Naive thymus-derived CD4-positive, alpha-beta T cell (primary cell): ENCODE measurements at regions of chr15 and their contacts with region 1.

Region 1: GRCh38 chr15:98647774-98648653 is at the start of gene IGF1R:
- DNase-seq: peak; percentile 87 to 98 (median 94)
- ATAC-seq: peak; percentile 86
- H3K4me3 ChIP-seq: peak within 1 kb of the TSS; percentile 74
- H3K4me3 Mint-ChIP-seq: peak within 1 kb of the TSS; percentile 83 to 98 (median 92)
- H3K27ac ChIP-seq: peak within 1 kb of the TSS; percentile 82
- H3K27ac Mint-ChIP-seq: peak within 1 kb of the TSS; percentile 89 to 97 (median 93)
- H3K4me1 ChIP-seq: peaks cover 0 to 11% of the 10 kb centered on the region in 2 donors
- H3K4me1 Mint-ChIP-seq: peaks cover 14 to 41% (median 29%) of the 10 kb centered on the region in 7 donors
- H3K27me3 ChIP-seq: peaks cover 0 to 16% of the 10 kb centered on the region in 2 donors
- H3K27me3 Mint-ChIP-seq: peaks cover 0 to 58% (median 0%) of the 10 kb centered on the region in 5 donors
- total RNA-seq, gene IGF1R: 37.4 to 167 (median 124) TPM

Region 2: GRCh38 chr15:98581715-98582114 is 66.3 kb before region 1 on chr15:
- CTCF ChIA-PET with region 1: interaction called, 29 read pairs
- POLR2A ChIA-PET with region 1: interaction called, 12 read pairs
- intact Hi-C with region 1: loop called (anchors 1 to 2 kb)
- DNase-seq: peak in 6 of 9 donors; percentile 18 to 54 (median 40)
- ATAC-seq: peak; percentile 60
- H3K4me3 ChIP-seq: no peak overlapping the region
- H3K4me3 Mint-ChIP-seq: no peak overlapping the region
- H3K27ac ChIP-seq: no peak overlapping the region
- H3K27ac Mint-ChIP-seq: no peak overlapping the region
- H3K4me1 ChIP-seq: peaks cover 0 to 11% of the 10 kb centered on the region in 2 donors
- H3K4me1 Mint-ChIP-seq: peaks cover 4 to 18% (median 13%) of the 10 kb centered on the region in 7 donors
- H3K27me3 ChIP-seq: peaks cover 0 to 3% of the 10 kb centered on the region in 2 donors
- H3K27me3 Mint-ChIP-seq: peaks cover 22 to 58% (median 34%) of the 10 kb centered on the region in 5 donors

Region 3: DNA sequence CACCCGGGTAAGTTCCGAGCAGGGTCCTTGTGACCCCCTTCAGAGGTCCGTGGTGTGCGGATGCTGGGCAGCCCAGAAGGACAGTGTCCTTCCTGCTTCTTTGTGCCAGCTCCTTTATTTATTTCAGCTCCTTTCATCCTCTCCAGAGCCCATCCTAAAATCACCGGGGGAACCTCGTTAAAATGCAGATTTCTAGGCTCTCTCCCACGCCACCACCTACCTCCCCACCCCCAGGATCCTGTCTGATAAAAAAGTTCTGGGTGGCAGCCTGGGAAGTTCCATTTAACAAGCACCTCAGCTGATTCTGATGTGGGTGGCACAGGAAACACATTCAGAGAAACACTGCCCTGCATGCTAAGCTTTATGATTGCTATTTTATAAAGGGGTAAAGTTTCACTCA is 12.2 kb before region 1 on chr15:
- CTCF ChIA-PET with region 1: interaction called, 4 read pairs
- POLR2A ChIA-PET with region 1: interaction called, 46 read pairs
- intact Hi-C with region 1: loop called in 1 of 2 experiments (anchors 1 kb)
- DNase-seq: peak in 5 of 9 donors; percentile 17 to 42 (median 29)
- ATAC-seq: peak; percentile 51
- H3K4me3 ChIP-seq: no peak overlapping the region
- H3K4me3 Mint-ChIP-seq: peak overlapping the region in 9 of 10 donors; percentile 59 to 83 (median 77)
- H3K27ac ChIP-seq: no peak overlapping the region
- H3K27ac Mint-ChIP-seq: peak overlapping the region in 7 of 9 donors; percentile 34 to 79 (median 62)
- H3K4me1 ChIP-seq: peaks cover 0 to 12% of the 10 kb centered on the region in 2 donors
- H3K4me1 Mint-ChIP-seq: peaks cover 5 to 23% (median 18%) of the 10 kb centered on the region in 7 donors
- H3K27me3 ChIP-seq: no peaks in the 10 kb centered on the region
- H3K27me3 Mint-ChIP-seq: peaks cover 0 to 13% (median 0%) of the 10 kb centered on the region in 5 donors

Region 4: DNA sequence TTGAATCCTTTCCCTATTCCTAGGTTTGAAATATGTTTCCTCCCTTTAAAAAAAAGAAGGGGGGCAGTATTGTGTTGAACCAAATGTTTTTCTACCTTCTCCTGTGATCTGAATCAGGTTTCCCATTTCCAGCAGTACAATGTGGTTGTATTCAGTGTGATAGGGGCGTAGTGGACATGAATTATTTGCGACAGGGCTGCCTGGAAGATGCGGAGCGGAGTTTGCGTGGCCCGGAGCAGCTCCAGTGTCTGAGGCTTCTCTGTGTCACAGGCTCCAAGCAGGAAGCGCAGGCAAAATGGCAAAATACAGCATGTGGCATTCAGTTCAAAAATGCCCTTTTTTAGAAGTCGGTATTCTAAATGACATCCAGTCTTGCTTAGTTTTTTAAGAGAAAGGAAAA is 205.1 kb after region 1 on chr15:
- CTCF ChIA-PET with region 1: interaction called, 4 read pairs
- POLR2A ChIA-PET with region 1: interaction called, 4 read pairs
- intact Hi-C with region 1: loop called (anchors 1 kb)
- DNase-seq: peak; percentile 36 to 74 (median 65)
- ATAC-seq: peak; percentile 68
- H3K4me3 ChIP-seq: peak overlapping the region; percentile 81
- H3K4me3 Mint-ChIP-seq: peak overlapping the region; percentile 87 to 98 (median 93)
- H3K27ac ChIP-seq: peak overlapping the region; percentile 61
- H3K27ac Mint-ChIP-seq: peak overlapping the region; percentile 85 to 97 (median 91)
- H3K4me1 ChIP-seq: peaks cover 19 to 20% of the 10 kb centered on the region in 2 donors
- H3K4me1 Mint-ChIP-seq: peaks cover 39 to 90% (median 85%) of the 10 kb centered on the region in 7 donors
- H3K27me3 ChIP-seq: no peaks in the 10 kb centered on the region
- H3K27me3 Mint-ChIP-seq: no peaks in the 10 kb centered on the region

Region 5: DNA sequence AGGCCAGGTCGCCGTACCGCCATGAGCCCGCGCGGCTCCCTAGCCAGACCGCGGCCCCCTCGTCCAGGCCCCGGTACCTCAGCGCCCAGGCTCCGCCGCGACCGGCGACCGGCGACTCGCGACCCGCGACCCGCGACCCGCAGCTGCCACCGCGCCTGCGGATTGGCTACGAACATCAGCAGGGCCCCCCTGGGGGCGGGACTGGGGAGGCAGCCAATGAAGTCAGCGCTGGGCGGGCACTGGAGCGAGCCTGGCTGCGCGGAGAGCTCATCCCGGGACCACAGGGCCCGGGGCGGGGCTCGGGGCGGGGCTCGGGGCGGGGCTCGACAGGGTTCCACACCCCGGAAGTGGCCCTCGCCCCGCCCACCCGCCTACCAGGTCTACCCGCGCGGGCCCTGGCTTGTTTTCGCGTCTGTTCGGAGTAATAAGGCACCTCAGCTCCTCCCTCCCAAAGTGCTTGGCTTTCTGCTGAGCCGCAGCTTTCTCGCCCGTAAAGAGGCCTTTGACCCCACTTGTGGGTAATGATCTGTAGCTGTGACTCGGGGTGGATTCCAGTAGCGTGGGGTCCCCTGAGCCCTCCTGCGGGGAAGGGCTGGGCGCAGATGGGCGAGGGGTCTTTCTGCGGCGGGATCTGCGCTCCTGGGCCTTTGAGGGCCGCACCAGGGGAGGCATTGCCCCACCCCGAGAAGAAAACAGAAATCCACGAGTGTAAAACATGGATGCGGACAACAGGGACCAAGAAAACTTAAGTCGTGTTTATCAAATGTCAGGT is 1085.4 kb after region 1 on chr15 and contains the start of gene LYSMD4:
- CTCF ChIA-PET with region 1: no interaction called
- POLR2A ChIA-PET with region 1: interaction called, 3 read pairs
- intact Hi-C with region 1: loop called in 1 of 2 experiments (anchors 1 kb)
- DNase-seq: peak; percentile 93 to 98 (median 96)
- ATAC-seq: peak; percentile 100
- H3K4me3 ChIP-seq: peak within 1 kb of the TSS; percentile 70
- H3K4me3 Mint-ChIP-seq: peak within 1 kb of the TSS; percentile 81 to 92 (median 88)
- H3K27ac ChIP-seq: peak within 1 kb of the TSS; percentile 84
- H3K27ac Mint-ChIP-seq: peak within 1 kb of the TSS; percentile 82 to 97 (median 95)
- H3K4me1 ChIP-seq: peaks cover 10 to 13% of the 10 kb centered on the region in 2 donors
- H3K4me1 Mint-ChIP-seq: peaks cover 5 to 36% (median 27%) of the 10 kb centered on the region in 7 donors
- H3K27me3 ChIP-seq: no peaks in the 10 kb centered on the region
- H3K27me3 Mint-ChIP-seq: no peaks in the 10 kb centered on the region
- total RNA-seq, gene LYSMD4: 7.9 to 22.4 (median 15.4) TPM